GM10248 (cell line): ENCODE measurements at regions of chr10 and their contacts with region 1.

Region 1: GRCh38 chr10:73517271-73517877 is 21.6 kb upstream of the PPP3CB start:
- DNase-seq: no peak
- CTCF ChIP-seq: no peak

Region 2: DNA sequence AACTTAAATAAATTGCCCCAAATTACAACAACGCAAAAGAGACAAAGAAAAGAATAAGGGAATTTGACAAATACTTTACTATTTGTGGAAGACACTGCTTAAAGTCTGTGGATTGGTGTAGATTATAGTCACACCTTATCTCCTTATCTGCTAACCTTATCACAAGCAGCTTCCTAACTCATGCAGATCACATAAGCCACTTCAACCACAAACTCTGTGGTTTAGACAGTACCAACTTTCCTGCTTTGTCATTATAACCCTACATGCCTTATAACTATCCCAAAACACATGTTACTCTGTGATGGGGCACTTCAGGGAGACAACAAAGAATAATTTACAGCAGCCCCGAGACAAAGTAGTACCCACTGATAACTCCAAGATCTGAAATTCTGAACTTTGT is 19.9 kb after region 1 on chr10:
- CTCF ChIA-PET with region 1: interaction called, 71 read pairs
- POLR2A ChIA-PET with region 1: no interaction called
- DNase-seq: no peak
- CTCF ChIP-seq: no peak

Region 3: DNA sequence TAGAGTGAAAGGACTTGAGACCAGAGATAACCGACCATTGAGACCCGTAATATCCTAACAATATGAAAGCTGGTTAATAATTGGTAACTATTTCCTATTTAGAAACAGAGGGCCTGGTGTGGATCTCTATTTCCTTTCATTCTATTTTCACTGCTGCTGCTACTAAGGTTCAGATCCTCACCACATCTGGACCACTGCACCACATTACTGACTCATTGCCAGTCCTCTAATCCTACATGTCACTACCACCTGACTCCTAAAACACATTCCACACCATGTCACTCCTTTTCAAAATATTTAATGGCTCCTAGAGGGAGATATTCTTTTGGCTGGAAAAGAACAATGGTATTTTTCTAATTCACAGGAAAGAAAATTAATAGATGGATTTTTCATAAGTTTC is 67.4 kb after region 1 on chr10:
- CTCF ChIA-PET with region 1: no interaction called
- POLR2A ChIA-PET with region 1: no interaction called
- DNase-seq: no peak
- CTCF ChIP-seq: no peak